Body of pancreas (tissue), 4 donors: ENCODE measurements at regions of chr1 and their contacts with region 1.

Region 1: DNA sequence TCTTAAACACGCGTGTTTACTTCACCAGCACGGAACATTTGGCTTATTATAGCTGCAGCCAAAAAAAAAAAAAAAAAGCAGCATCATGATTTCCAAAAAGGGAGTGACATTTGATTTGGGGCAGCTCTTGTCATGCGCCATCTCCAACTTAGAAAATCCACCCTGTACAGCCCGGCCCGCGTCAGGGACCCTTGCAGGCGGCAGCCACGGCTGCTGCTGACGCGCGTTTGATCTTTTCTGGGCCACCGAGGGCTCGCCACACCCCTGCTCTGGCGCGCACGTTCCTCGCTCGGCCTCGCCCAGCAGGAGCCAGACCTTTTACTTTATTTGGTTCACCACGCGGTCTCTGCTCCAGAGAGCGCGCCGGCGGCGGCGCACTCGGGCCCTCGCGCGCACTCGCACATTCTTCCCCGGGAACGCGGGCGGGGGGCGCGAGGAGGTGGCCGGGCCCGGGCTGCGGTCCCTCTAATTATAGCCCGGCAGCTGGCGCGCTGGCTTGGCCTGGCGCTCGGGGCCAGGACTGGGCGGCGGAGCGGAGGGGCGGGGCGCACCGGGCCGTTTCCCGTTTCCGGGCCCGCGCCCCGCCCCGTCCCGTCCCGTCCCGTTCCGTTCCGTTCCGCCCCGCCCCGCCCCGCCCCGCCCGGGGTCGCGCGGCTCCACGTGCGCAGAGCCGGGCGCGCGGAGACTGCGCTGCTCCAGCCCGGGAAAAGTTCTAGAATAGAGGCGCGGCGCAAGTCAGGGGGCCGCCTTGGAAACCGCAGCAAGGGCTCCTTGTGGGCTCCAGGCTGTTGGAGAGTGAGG is 10.2 kb downstream of the IRF2BP2 start:
- DNase-seq: peak; percentile 89 to 93 (median 90)
- ATAC-seq: peak; percentile 83
- H3K4me3 ChIP-seq: no peak overlapping the region
- H3K27ac ChIP-seq: peak overlapping the region; percentile 95 to 100 (median 100)
- H3K4me1 ChIP-seq: peaks cover 55% of the 10 kb centered on the region
- H3K27me3 ChIP-seq: no peaks in the 10 kb centered on the region
- CTCF ChIP-seq: peak in 2 of 7 experiments; percentile 23 to 35
- POLR2A ChIP-seq: peak; percentile 82 to 89 (median 84)

Region 2: GRCh38 chr1:234331511-234331910 is 268.3 kb before region 1 on chr1:
- intact Hi-C with region 1: no loop called
- DNase-seq: no peak
- ATAC-seq: no peak
- H3K4me3 ChIP-seq: no peak overlapping the region
- H3K27ac ChIP-seq: no peak overlapping the region
- H3K4me1 ChIP-seq: peaks cover 6% of the 10 kb centered on the region
- H3K27me3 ChIP-seq: no peaks in the 10 kb centered on the region
- CTCF ChIP-seq: no peak
- POLR2A ChIP-seq: no peak

Region 3: DNA sequence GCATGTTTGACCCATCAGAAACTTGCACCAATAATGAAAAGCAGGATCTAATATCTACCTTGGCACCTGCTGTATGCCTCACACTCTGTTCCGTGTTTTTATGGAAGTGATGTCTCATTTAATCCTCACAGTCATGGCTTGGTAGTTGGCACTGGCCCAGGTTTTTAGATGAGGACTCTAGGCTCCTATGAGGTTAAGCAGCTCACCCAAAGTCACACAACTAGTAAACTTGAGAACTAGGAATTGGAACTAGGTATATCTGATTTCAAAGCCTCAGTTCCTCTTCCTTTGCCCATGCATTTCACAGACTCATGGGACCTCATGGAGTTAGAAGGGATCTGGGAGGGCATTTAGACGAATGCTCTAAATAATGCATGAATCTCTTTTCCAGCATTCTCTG is 99.5 kb before region 1 on chr1:
- intact Hi-C with region 1: loop called (anchors 10 kb)
- DNase-seq: peak in 1 of 4 donors; percentile 32
- ATAC-seq: no peak
- H3K4me3 ChIP-seq: no peak overlapping the region
- H3K27ac ChIP-seq: peak overlapping the region in 3 of 4 donors; percentile 60 to 76 (median 76)
- H3K4me1 ChIP-seq: peaks cover 31% of the 10 kb centered on the region
- H3K27me3 ChIP-seq: no peaks in the 10 kb centered on the region
- CTCF ChIP-seq: no peak
- POLR2A ChIP-seq: no peak

Region 4: GRCh38 chr1:234554698-234555311 is 45.0 kb before region 1 on chr1:
- intact Hi-C with region 1: loop called (anchors 5 kb)
- DNase-seq: peak in 3 of 4 donors; percentile 38 to 60 (median 53)
- ATAC-seq: peak; percentile 60
- H3K4me3 ChIP-seq: no peak overlapping the region
- H3K27ac ChIP-seq: no peak overlapping the region
- H3K4me1 ChIP-seq: no peaks in the 10 kb centered on the region
- H3K27me3 ChIP-seq: no peaks in the 10 kb centered on the region
- CTCF ChIP-seq: no peak
- POLR2A ChIP-seq: no peak

Region 5: DNA sequence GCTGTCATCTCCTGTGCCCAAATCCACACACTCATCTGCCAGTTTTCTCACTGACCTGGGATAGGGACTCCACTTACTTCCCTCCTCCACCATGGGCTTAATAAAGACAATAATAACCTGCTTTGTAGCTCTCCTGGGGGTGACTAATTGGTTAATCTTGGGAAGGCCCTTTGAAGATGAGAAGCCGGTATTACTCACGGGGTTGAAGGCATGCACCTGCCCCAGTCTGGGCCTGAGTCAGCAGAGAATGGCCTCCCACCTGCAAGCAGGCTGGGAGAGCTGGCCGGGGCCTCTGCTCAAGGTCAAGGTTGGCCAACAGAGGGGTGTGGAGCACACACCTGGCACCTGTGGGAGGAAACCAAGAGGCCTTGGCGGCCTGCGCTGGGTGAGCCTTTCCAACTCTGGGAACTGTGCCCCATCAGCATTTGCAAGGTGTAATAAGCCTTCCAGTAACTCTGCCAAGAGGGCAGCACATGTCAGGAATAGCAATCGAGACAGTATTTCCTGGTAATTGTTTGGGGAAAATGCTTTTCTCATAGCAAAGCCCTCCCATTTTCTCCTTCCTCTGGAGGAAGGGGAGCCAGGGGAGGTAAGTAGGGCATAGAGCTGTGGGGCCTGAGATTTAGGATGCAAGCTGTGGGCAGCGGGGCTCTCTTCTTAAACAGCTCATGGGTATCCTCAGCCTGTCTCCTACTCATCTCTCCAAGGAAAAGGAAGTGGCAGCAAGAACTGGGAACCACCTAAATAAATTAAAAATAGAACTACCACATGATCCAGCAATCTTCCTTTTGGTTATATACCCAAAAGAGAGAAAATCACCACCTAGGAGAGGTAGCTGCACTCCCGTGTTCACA is 479.9 kb after region 1 on chr1:
- intact Hi-C with region 1: loop called (anchors 10 kb)
- DNase-seq: peak; percentile 96 to 99 (median 98)
- ATAC-seq: peak; percentile 85
- H3K4me3 ChIP-seq: no peak overlapping the region
- H3K27ac ChIP-seq: peak overlapping the region; percentile 79 to 97 (median 92)
- H3K4me1 ChIP-seq: peaks cover 73% of the 10 kb centered on the region
- H3K27me3 ChIP-seq: no peaks in the 10 kb centered on the region
- CTCF ChIP-seq: peak in 3 of 7 experiments; percentile 27 to 30 (median 30)
- POLR2A ChIP-seq: peak in 2 of 3 donors; percentile 29 to 30